Right ventricle myocardium inferior (tissue), 1 donor: ENCODE measurements at regions of chr2 and their contacts with region 1.

Region 1: DNA sequence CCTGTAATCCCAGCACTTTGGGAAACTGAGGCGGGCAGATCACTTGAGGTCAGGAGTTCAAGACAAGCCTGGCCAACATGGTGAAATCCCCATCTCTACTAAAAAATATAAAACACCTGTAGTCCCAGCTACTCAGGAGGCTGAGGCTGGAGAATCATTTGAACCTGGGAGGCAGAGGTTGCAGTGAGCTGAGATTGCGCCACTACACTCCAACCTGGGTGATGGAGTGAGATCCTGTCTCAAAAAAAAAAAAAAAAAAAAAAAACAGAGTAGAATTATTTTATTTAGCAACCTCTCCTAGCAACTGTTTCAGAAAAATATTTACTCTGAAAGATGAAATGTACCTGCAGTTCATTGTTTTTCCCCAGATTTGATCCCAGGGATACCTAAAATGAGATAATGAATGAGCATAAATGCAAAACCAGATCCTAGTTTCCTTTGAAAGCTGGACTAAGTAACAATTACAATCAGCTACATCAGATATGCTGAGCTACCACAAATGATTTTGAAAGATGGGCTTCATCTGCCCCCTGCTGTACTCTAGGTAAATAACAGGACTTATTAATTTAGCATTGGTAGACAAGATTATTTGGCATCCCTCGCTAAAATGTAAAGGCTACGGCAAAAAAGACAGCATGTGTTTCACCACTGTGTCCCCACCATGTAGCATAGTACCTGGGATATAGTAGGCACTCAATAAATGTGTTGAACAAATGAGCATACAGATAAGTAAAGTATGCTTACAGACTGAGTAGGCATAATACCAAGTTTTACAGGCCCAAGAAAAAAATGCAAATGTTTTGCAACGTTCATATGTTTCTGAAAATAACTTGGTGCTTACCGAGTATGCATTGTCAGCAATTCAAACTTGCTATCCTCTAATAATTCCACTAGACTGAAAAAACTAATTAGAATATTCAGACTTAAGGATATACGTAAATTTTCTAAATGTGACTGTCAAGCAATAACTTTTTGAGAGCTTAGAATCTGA is 102.5 kb downstream of the ATL2 start:
- DNase-seq: no peak
- ATAC-seq: no peak

Region 2: GRCh38 chr2:37389989-37390765 is 884.4 kb before region 1 on chr2:
- intact Hi-C with region 1: loop called (anchors 10 kb)
- DNase-seq: no peak
- ATAC-seq: no peak

Region 3: DNA sequence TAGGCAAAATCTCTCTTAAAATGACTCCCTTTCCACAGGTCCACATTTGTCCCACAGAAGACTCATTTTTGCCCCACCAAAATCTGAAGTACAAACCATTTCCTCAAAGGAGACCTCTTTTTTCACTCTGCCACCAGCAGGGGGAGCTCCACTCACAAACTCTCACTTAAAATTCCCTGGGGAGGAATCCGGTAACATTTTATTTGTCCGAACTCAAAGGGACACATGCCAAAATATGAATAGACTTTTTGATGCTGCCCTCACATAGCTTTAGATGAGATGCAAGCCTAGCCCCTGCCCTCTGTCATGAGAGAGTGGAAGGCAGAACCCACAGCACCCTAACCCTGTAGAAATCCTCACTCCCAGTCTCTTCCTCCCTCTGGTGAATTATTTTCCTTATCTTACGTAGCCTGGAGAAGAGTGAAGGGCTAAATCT is 292.4 kb before region 1 on chr2:
- intact Hi-C with region 1: loop called (anchors 1 kb)
- DNase-seq: no peak
- ATAC-seq: peak; percentile 39

Region 4: DNA sequence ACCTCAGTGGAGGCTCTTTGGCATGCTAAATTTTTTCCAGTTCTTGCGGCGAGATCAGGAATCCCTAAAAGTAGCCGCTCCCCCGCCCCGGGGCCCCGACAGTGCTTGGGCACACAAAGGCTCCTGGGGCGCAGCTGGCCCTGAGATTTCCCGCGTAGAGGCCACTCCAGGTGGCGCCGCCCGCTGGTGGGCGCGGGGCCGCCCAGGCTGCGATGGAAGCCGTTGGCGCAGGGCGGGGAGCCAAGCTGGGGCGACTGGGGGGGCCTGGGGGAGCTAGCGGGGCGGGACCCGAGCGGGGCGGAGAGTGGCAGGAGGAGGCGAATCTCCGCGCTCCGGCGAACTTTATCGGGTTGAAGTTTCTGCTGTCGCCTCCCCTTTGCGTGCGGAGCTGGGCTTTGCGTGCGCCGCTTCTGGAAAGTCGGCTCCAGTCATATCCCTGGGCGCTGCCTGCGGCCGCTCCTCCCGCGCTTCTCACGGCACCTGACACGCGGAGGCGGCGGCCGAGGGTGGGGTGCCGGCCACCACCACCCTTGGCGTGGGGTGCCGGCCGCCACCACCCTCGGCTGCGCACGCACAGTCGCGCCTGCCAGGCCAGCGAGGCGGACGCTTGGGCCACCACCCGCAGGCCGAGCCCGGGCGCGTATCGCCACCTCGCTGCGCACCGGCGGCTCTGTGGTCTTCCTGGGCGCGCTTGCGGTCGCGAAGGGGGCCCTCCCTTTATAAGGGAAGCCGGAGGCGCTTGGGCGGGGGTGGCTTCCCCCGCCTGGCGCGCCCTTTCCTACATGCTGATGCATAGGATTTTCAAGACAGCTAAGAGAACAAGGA is 197.8 kb before region 1 on chr2:
- intact Hi-C with region 1: loop called (anchors 10 kb)
- DNase-seq: peak; percentile 90
- ATAC-seq: peak; percentile 79

Region 5: GRCh38 chr2:38115216-38116032 is 159.2 kb before region 1 on chr2:
- intact Hi-C with region 1: loop called (anchors 10 kb)
- DNase-seq: peak; percentile 81
- ATAC-seq: peak; percentile 66

Region 6: GRCh38 chr2:39504790-39505335 is 1230.3 kb after region 1 on chr2:
- intact Hi-C with region 1: no loop called
- DNase-seq: no peak
- ATAC-seq: peak; percentile 45